AG04450 (cell line): ENCODE measurements at regions of chr12 and their contacts with region 1.

Region 1: GRCh38 chr12:26113853-26114719 is 10.8 kb downstream of the BHLHE41 start:
- DNase-seq: peak; percentile 53
- H3K4me3 ChIP-seq: peak overlapping the region; percentile 62
- H3K27ac ChIP-seq: peak overlapping the region; percentile 80
- H3K27me3 ChIP-seq: no peaks in the 10 kb centered on the region
- CTCF ChIP-seq: peak; percentile 23; the same call in 1 of the 2 replicates

Region 2: DNA sequence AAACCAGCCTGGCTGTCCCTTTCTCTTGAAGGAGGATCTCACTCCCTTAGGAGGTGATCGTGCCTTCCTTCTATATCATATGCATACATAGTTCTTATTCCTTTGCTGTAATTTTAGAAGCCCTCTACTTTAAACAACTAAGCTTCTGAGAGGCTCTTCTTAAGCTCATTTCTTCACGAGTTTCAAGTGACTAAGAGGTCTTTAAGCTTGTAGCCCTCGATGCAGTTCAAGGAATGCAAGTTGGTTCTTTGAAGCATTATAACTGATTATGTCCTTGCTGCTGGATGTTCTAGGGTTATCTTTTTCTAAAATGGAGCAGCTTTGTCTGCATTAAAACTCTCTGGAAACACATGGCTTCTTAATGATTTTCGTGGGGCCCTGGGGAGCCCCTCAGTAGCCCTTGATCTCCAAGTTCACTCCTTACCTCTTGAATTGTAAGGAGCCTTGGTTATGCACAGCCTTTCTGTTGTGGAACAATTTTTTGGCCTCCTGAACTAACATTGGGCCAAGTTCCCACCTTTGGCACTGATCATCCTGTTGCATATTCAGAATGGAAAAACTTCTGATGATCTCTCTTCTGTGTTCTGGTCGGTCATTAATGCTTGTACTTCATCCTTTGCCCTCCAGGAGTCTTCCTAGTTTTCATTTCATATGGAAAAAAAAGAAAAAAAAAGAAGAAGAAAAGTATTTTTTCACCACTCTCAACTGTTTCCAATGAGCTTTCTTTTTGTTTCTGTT is 143.0 kb before region 1 on chr12:
- CTCF ChIA-PET with region 1: no interaction called
- POLR2A ChIA-PET with region 1: no interaction called
- DNase-seq: no peak
- H3K4me3 ChIP-seq: no peak overlapping the region
- H3K27ac ChIP-seq: no peak overlapping the region
- H3K27me3 ChIP-seq: no peaks in the 10 kb centered on the region
- CTCF ChIP-seq: peak; percentile 38

Region 3: DNA sequence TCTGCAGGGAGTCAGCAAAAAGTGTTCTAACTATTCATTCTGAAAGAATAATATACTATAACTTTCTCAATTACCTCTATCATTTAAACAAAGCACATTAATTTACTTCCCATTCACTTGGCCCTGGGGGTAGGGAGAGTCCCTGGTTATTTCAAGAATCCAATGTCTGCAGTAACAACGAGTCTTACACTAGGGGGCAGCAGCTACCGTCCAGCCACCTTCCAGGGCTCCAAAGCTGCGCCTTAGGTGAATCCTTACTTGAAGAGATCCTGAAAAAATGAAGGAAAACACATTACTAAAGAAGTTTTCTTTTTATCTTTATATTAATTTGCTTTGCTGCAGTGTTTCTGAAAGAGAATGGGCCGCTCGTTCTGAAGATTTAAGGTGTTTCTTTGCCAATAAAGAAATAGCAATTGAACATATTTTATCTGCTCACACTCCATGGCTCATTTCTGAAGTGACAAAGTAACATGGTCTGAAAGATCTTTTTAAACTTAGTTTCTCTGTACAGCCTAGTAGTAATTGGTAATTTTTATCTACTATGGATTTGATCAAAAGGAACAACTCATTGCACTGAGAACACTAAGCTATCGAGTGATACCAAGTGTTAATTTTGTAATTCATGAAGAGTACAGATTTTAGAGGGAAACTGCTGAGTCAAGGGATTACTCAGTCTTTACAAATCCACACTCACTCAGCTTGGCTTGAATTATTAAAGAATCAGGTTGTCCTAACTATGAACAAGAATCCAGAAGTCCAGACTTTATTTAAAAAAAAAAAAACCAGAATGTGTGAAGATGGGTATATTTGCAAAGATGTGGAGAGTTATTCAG is 16.8 kb before region 1 on chr12:
- CTCF ChIA-PET with region 1: interaction called, 10 read pairs
- POLR2A ChIA-PET with region 1: no interaction called
- DNase-seq: peak; percentile 58
- H3K4me3 ChIP-seq: no peak overlapping the region
- H3K27ac ChIP-seq: no peak overlapping the region
- H3K27me3 ChIP-seq: no peaks in the 10 kb centered on the region
- CTCF ChIP-seq: peak; percentile 97